Activated T-helper 2 cell treated with anti-CD3 and anti-CD28 coated beads, Interferon-gamma antibody, Interleukin-2, Interleukin-4, amounts not matched to agents 10 μg/mL and 5 μg/mL and 100 μg/mL, durations not matched to agents 14 hours and 24 hours and 36 hours (primary cell): ENCODE measurements at regions of chr3 and their contacts with region 1.

Region 1: GRCh38 chr3:155859859-155860258 is 5.6 kb upstream of the SLC33A1 start:
- DNase-seq: no peak
- H3K4me3 Mint-ChIP-seq: no peak overlapping the region
- H3K27ac Mint-ChIP-seq: no peak overlapping the region
- H3K4me1 Mint-ChIP-seq: peaks cover 36% of the 10 kb centered on the region
- H3K27me3 Mint-ChIP-seq: no peaks in the 10 kb centered on the region

Region 2: GRCh38 chr3:155744626-155745324 is 115.1 kb before region 1 on chr3 and contains the start of gene PLCH1:
- intact Hi-C with region 1: loop called (anchors 10 kb)
- DNase-seq: peak; percentile 13
- H3K4me3 Mint-ChIP-seq: peak within 1 kb of the TSS; percentile 64
- H3K27ac Mint-ChIP-seq: no peak within 1 kb of the TSS
- H3K4me1 Mint-ChIP-seq: peaks cover 19% of the 10 kb centered on the region
- H3K27me3 Mint-ChIP-seq: peaks cover 61% of the 10 kb centered on the region
- total RNA-seq, gene PLCH1: 0.09 and 0.25 TPM in 2 replicates